Activated naive CD4-positive, alpha-beta T cell treated with anti-CD3 and anti-CD28 coated beads for 36 hours (primary cell): ENCODE measurements at regions of chr2 and their contacts with region 1.

Region 1: GRCh38 chr2:177263451-177264208 is 897 bp downstream of the NFE2L2 start:
- DNase-seq: peak; percentile 95
- H3K4me3 Mint-ChIP-seq: peak overlapping the region; percentile 92
- H3K27ac Mint-ChIP-seq: peak overlapping the region; percentile 99
- H3K4me1 Mint-ChIP-seq: peaks cover 53% of the 10 kb centered on the region
- H3K27me3 Mint-ChIP-seq: no peaks in the 10 kb centered on the region

Region 2: GRCh38 chr2:177212106-177212890 is 51.3 kb before region 1 on chr2 and contains the start of gene HNRNPA3:
- CTCF ChIA-PET with region 1: interaction called, 6 read pairs
- intact Hi-C with region 1: loop called (anchors 1 kb)
- DNase-seq: peak; percentile 99
- H3K4me3 Mint-ChIP-seq: peak within 1 kb of the TSS; percentile 97
- H3K27ac Mint-ChIP-seq: peak within 1 kb of the TSS; percentile 100
- H3K4me1 Mint-ChIP-seq: peaks cover 43% of the 10 kb centered on the region
- H3K27me3 Mint-ChIP-seq: no peaks in the 10 kb centered on the region
- total RNA-seq, gene HNRNPA3: 312 to 340 TPM

Region 3: GRCh38 chr2:177239932-177240630 is 23.5 kb before region 1 on chr2:
- CTCF ChIA-PET with region 1: interaction called, 9 read pairs
- intact Hi-C with region 1: loop called (anchors 1 kb)
- DNase-seq: peak; percentile 63
- H3K4me3 Mint-ChIP-seq: peak overlapping the region; percentile 23
- H3K27ac Mint-ChIP-seq: peak overlapping the region; percentile 79
- H3K4me1 Mint-ChIP-seq: peaks cover 78% of the 10 kb centered on the region
- H3K27me3 Mint-ChIP-seq: no peaks in the 10 kb centered on the region

Region 4: DNA sequence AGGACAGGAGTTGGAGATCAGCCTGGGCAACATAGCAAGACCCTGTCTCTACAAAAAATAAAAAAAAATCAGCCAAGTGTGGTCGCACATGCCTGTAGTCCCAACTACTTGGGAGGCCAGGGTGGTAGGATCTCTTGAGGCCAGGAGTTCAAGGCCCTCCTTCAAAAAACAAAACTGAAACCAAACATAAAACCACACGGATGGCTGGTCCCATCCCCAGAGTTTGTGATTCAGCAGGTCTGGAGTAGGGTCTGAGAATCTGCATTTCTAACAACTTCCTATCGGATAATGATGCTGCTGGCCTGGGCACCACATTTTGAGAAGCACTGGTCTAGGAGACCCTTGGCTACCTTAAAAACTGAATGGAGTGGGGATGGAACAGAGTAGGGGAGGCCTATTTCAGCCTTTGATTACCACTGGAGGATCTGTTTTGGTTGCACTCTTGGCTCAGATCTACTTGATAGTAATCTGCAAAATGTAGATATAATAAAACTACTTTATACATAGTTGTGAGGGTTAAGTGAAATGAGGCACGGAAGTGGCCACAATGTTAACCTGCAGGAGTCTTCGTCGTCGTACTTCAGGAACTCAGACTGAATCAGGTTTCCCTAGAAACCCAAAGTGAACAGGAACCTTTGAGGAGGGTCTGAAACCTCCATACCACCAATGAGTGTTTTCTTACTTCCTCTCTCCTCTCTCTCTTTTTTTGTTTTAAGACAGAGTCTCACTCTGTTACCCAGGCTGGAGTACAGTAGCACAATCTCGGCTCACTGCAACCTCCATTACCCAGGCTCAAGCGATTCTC is 26.4 kb after region 1 on chr2:
- CTCF ChIA-PET with region 1: interaction called, 17 read pairs
- intact Hi-C with region 1: loop called (anchors 1 kb)
- DNase-seq: peak; percentile 41
- H3K4me3 Mint-ChIP-seq: no peak overlapping the region
- H3K27ac Mint-ChIP-seq: peak overlapping the region; percentile 67
- H3K4me1 Mint-ChIP-seq: peaks cover 21% of the 10 kb centered on the region
- H3K27me3 Mint-ChIP-seq: no peaks in the 10 kb centered on the region

Region 5: GRCh38 chr2:177392373-177393202 is 129.0 kb after region 1 on chr2 and contains the start of gene AGPS:
- CTCF ChIA-PET with region 1: no interaction called
- intact Hi-C with region 1: loop called (anchors 2 kb)
- DNase-seq: peak; percentile 85
- H3K4me3 Mint-ChIP-seq: peak within 1 kb of the TSS; percentile 93
- H3K27ac Mint-ChIP-seq: peak within 1 kb of the TSS; percentile 62
- H3K4me1 Mint-ChIP-seq: peaks cover 59% of the 10 kb centered on the region
- H3K27me3 Mint-ChIP-seq: no peaks in the 10 kb centered on the region
- total RNA-seq, gene AGPS: 50.7 to 51.8 TPM

Region 6: GRCh38 chr2:177419274-177419673 is 155.6 kb after region 1 on chr2:
- CTCF ChIA-PET with region 1: interaction called, 10 read pairs
- intact Hi-C with region 1: loop called (anchors 1 kb)
- DNase-seq: no peak
- H3K4me3 Mint-ChIP-seq: no peak overlapping the region
- H3K27ac Mint-ChIP-seq: peak overlapping the region; percentile 63
- H3K4me1 Mint-ChIP-seq: peaks cover 37% of the 10 kb centered on the region
- H3K27me3 Mint-ChIP-seq: no peaks in the 10 kb centered on the region

Region 7: GRCh38 chr2:177618255-177619253 is 354.9 kb after region 1 on chr2:
- CTCF ChIA-PET with region 1: no interaction called
- intact Hi-C with region 1: loop called (anchors 2 kb)
- DNase-seq: peak; percentile 95
- H3K4me3 Mint-ChIP-seq: peak overlapping the region; percentile 93
- H3K27ac Mint-ChIP-seq: peak overlapping the region; percentile 96
- H3K4me1 Mint-ChIP-seq: peaks cover 3% of the 10 kb centered on the region
- H3K27me3 Mint-ChIP-seq: no peaks in the 10 kb centered on the region